ENCODE measurements at regions of chrX and their contacts with region 1.

Region 1: GRCh38 chrX:153470435-153471363 is at the start of gene HAUS7:
- DNase-seq: peak; percentile 73 to 88
- H3K4me3 ChIP-seq: peak within 1 kb of the TSS; percentile 84
- H3K27ac ChIP-seq: no peak within 1 kb of the TSS
- H3K4me1 ChIP-seq: no peaks in the 10 kb centered on the region
- H3K27me3 ChIP-seq: no peaks in the 10 kb centered on the region
- CTCF ChIP-seq: peak; percentile 73
- total RNA-seq, gene HAUS7: 29.3 and 33.4 TPM in 2 replicates

Region 2: GRCh38 chrX:152479525-152479924 is 991.2 kb before region 1 on chrX:
- CTCF ChIA-PET with region 1: no interaction called
- POLR2A ChIA-PET with region 1: no interaction called
- intact Hi-C with region 1: no loop called
- DNase-seq: no peak
- H3K4me3 ChIP-seq: no peak overlapping the region
- H3K27ac ChIP-seq: no peak overlapping the region
- H3K4me1 ChIP-seq: no peaks in the 10 kb centered on the region
- H3K27me3 ChIP-seq: no peaks in the 10 kb centered on the region
- CTCF ChIP-seq: no peak

Region 3: DNA sequence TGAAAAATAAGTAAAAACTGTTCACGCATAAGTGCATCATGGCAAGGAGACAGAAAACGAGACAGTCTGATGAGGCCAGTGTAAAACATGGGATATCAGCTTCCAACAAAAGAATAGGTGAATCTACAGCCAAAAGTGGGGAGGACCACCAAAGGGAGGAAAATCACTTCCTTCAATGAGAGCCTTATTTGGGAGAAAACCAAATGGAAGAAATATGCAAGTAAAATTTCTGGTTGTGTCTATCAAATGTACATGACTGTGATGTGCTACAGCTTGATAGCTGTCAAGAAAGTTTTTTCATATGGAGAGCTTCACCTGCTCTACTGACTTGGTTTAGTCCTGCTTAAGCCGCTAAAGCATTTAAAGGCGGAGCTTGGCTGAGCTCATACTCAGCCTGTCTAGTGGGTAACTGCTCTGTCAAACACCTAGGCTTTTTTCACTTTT is 225.4 kb before region 1 on chrX:
- CTCF ChIA-PET with region 1: interaction called, 16 read pairs
- POLR2A ChIA-PET with region 1: no interaction called
- intact Hi-C with region 1: no loop called
- DNase-seq: peak in 1 of 2 experiments; percentile 22
- H3K4me3 ChIP-seq: no peak overlapping the region
- H3K27ac ChIP-seq: no peak overlapping the region
- H3K4me1 ChIP-seq: no peaks in the 10 kb centered on the region
- H3K27me3 ChIP-seq: peaks cover 83% of the 10 kb centered on the region
- CTCF ChIP-seq: no peak

Region 4: GRCh38 chrX:153539171-153539978 is 68.7 kb after region 1 on chrX:
- CTCF ChIA-PET with region 1: no interaction called
- POLR2A ChIA-PET with region 1: no interaction called
- intact Hi-C with region 1: no loop called
- DNase-seq: peak in 1 of 2 experiments; percentile 81
- H3K4me3 ChIP-seq: no peak overlapping the region
- H3K27ac ChIP-seq: no peak overlapping the region
- H3K4me1 ChIP-seq: no peaks in the 10 kb centered on the region
- H3K27me3 ChIP-seq: peaks cover 25% of the 10 kb centered on the region; the same call in 1 of the 2 replicates
- CTCF ChIP-seq: peak; percentile 83

Region 5: DNA sequence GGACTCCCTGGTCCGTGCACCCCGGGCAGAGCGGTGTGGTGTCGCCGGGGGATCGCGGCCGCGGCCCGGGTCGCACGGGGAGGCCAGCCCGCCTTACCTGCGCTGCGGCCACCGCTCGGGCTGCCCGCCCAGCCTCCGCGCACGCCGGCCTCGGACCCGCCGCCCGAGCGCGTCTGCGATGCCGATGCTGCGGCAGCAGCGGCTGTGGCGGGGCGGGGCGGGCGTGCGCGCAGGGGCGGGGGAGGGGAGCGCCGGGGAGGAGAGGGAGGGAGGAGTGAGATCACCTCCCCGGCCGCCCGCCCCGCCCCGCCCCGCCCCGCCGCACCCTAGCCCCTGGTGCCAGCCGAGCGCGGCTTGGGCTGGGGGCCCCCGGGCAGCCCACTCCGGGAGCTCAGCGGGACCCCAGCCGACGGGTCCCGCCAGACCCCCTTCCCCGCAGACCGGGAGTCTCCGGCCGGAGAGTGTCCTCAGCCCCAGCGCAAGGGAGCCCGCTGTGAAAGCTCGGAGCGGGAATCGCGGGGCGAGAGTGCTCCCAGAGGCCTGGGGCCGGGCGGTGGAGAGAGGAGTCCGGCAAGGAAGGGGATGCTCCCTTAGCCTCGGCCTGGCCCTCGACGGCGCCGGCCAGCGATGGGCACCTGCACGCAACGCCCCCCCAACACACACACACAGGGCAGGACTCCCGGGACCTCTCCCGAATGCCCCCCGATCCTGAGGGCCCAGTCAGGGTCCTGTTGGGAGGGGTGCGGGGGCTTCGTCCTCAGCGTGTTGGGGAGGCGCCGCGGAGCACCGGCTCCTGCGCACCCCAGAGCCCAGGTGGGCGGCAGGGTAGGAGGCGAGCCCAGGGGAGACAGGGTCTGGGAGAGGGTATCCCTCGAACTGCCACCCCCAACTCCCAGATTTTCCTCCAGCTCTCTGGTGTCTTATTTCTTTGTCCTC is 415.5 kb after region 1 on chrX and contains the start of gene L1CAM:
- CTCF ChIA-PET with region 1: no interaction called
- POLR2A ChIA-PET with region 1: no interaction called
- intact Hi-C with region 1: no loop called
- DNase-seq: no peak
- H3K4me3 ChIP-seq: no peak within 1 kb of the TSS
- H3K27ac ChIP-seq: no peak within 1 kb of the TSS
- H3K4me1 ChIP-seq: 0 out of 2 replicates have a peak, but pooled peaks cover 12% of the 10 kb centered on the region
- H3K27me3 ChIP-seq: peaks cover 11% of the 10 kb centered on the region
- CTCF ChIP-seq: no peak
- total RNA-seq, gene L1CAM: 68.8 and 79.0 TPM in 2 replicates